ENCODE measurements at regions of chr22 and their contacts with region 1.

Region 1: GRCh38 chr22:41543854-41544670 is at the start of gene POLR3H:
- DNase-seq: peak; percentile 99
- H3K4me3 Mint-ChIP-seq: peak within 1 kb of the TSS; percentile 95
- H3K27ac Mint-ChIP-seq: peak within 1 kb of the TSS; percentile 89
- H3K4me1 Mint-ChIP-seq: peaks cover 29% of the 10 kb centered on the region
- H3K27me3 Mint-ChIP-seq: no peaks in the 10 kb centered on the region
- total RNA-seq, gene POLR3H: 49.2 and 50.6 TPM in 2 replicates

Region 2: GRCh38 chr22:41589391-41590241 is 45.6 kb after region 1 on chr22 and contains the start of gene PMM1:
- intact Hi-C with region 1: loop called (anchors 2 kb)
- DNase-seq: peak; percentile 100
- H3K4me3 Mint-ChIP-seq: peak within 1 kb of the TSS; percentile 95
- H3K27ac Mint-ChIP-seq: peak within 1 kb of the TSS; percentile 86
- H3K4me1 Mint-ChIP-seq: peaks cover 23% of the 10 kb centered on the region
- H3K27me3 Mint-ChIP-seq: no peaks in the 10 kb centered on the region
- total RNA-seq, gene PMM1: 19.7 and 23.1 TPM in 2 replicates

Measured in activated CD4-positive, alpha-beta T cell treated with anti-CD3 and anti-CD28 coated beads, Interleukin-2, amount 10 ng/mL, durations not matched to agents 24 days and 14 days (primary cell).